RWPE1 (cell line): ENCODE measurements at regions of chr21 and their contacts with region 1.

Region 1: DNA sequence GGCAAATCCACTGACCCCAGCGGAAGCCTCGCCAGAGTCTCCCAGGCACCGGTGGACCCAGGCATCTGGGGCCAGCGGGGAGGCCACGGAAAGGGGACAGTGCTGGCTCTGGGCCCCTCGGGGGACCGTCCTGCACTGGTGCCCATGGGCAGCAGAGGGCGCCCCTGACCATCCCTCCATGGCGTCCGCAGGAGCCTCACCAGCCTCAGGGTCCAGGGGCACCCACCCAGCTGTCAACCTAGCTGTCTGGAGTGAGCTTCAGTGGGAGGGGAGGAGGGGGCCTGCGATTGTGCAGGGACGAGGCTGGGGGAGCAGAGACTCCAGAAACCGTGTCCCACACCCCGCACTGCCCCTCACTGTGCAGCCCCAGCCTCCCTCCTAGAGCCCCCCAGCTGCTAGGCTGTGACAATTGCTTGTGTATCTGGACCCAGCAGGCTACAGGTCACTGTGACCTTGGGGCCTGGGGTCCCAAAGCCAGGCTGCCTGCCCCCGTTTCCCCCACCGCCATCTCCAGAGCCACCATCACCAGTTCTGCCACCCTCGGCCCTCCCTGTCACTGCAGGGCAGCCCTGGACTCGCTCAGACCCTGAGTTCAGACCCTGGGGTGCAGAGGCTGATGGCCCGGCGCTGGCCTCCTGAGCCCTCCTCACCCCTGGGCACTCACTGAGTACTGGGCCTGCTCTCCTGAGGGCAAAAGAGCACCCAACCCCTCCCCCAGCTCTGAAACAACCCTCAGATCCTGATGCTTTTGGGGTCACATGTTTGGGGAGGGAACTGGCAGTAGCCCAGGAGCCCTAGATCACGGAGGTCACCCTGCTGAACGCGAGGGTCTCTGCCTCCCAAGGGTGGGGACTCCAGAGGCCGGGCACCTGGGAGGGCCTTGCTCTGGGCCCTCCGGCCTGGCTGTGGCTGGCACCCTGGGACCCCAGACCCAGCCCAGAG is 10.6 kb upstream of the COL6A1 start:
- DNase-seq: peak; percentile 41
- H3K27ac ChIP-seq: peak overlapping the region; percentile 69
- CTCF ChIP-seq: peak; percentile 92

Region 2: GRCh38 chr21:46144464-46145070 is 173.6 kb after region 1 on chr21:
- CTCF ChIA-PET with region 1: interaction called, 12 read pairs
- POLR2A ChIA-PET with region 1: no interaction called
- DNase-seq: no peak
- H3K27ac ChIP-seq: peak overlapping the region; percentile 79
- CTCF ChIP-seq: no peak